Right cardiac atrium (tissue), 5 donors: ENCODE measurements at regions of chr3 and their contacts with region 1.

Region 1: DNA sequence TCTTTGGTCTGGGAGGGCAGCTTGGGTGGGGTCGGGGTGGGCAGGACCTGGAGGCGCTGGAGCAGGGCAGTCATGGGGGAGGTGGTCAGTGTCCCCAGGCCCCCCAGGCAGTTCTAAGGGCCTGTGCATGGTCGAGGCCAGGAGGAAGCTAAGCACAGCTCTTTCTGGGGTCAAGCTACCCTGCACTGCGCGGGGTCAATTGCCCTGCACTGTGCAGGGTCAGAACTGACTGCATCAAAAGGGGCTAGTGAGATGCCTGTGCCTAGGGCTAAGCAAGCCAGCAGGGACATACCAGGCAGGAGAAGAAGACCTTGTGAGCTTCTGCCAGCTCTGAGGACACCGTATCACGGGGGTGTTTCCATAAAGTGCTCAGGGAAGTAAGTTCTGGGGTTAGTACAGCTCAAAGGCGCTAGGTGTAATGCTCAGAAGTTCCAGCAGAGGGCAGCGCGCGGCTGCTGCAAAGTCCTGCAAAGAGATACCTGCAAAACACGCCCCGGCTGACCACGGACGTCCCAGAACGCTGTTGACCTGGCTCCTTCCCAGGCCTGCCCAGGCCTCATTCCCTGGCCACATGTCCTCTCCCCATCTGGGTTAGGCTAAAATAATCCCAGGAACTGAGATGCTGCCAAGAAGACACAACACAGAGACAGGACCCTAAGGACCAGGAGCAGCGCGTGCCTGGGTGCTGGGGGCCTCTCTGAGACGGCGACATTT is 18.8 kb upstream of the IQSEC1 start:
- DNase-seq: peak; percentile 85 to 95 (median 93)
- ATAC-seq: peak; percentile 84 to 86
- H3K4me3 ChIP-seq: no peak overlapping the region
- H3K27ac ChIP-seq: no peak overlapping the region
- H3K4me1 ChIP-seq: no peaks in the 10 kb centered on the region
- H3K27me3 ChIP-seq: no peaks in the 10 kb centered on the region

Region 2: GRCh38 chr3:12785096-12785495 is 307.0 kb before region 1 on chr3:
- intact Hi-C with region 1: no loop called
- DNase-seq: no peak
- ATAC-seq: no peak
- H3K4me3 ChIP-seq: no peak overlapping the region
- H3K27ac ChIP-seq: no peak overlapping the region
- H3K4me1 ChIP-seq: no peaks in the 10 kb centered on the region
- H3K27me3 ChIP-seq: no peaks in the 10 kb centered on the region

Region 3: GRCh38 chr3:13282986-13283876 is 191.2 kb after region 1 on chr3:
- intact Hi-C with region 1: loop called in 1 of 4 experiments (anchors 10 kb)
- DNase-seq: no peak
- ATAC-seq: peak in 1 of 2 donors; percentile 47
- H3K4me3 ChIP-seq: peak overlapping the region; percentile 90
- H3K27ac ChIP-seq: no peak overlapping the region
- H3K4me1 ChIP-seq: no peaks in the 10 kb centered on the region
- H3K27me3 ChIP-seq: no peaks in the 10 kb centered on the region

Region 4: DNA sequence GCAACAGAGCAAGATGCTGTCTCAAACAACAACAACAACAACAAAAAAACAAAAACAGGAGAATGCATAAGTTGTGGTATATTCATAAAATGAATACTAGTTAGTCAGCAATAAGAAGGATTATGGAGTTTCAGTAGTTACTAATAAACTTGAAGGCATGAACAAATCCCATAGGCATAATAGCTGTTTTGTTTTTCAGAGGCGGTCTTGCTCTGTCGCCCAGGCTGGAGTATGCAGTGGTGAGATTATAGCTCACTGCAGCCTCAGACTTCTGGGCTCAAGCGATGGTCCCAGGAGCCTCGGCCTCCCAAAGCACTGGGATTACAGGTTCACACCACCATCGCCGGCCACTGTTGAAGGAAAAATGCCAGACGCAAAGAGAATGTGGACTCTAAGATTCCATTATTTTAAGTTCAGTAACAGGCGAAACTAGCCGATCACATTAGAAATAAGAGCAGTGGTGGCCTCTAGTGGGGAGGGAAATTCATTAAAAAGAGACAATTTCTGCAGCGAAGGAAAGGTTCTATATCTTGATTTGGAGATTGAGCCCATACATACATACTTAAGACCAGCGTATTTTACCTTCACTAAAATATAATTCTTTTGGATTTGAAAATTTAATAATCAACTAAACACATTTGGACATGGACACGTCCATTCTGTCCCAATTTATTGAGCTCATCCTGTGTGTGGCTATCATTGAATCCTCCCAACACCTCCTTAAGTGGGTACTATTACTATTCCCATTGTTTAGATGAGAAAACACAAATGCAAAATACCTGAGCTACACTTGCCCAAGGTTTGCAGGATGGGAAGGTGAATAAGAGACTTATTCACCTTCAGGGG is 360.7 kb after region 1 on chr3:
- intact Hi-C with region 1: loop called (anchors 2 to 10 kb)
- DNase-seq: peak in 1 of 3 donors; percentile 51
- ATAC-seq: peak; percentile 40 to 48
- H3K4me3 ChIP-seq: peak overlapping the region; percentile 33
- H3K27ac ChIP-seq: peak overlapping the region; percentile 91
- H3K4me1 ChIP-seq: no peaks in the 10 kb centered on the region
- H3K27me3 ChIP-seq: no peaks in the 10 kb centered on the region